GM10248 (cell line): ENCODE measurements at regions of chr2 and their contacts with region 1.

Region 1: DNA sequence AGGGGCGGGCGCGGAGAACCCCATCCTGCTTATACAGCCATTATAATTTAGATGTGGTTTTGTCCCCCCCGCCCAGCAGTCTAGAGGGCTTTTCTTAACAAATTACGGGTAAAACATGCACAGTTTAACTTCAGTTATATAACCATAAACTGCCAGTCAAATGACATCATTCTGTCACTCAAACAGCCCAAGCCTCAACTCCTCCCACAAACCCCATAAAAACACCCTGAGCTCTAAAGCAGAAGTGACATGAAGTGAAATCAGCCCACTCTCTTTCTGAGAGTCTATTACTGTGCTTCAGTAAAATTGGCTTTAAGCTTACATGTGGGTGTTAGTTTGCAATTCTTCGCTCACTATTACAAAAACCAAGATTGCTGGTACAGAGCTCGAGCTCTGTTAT is 705.1 kb upstream of the GCFC2 start:
- DNase-seq: peak; percentile 16
- CTCF ChIP-seq: no peak

Region 2: DNA sequence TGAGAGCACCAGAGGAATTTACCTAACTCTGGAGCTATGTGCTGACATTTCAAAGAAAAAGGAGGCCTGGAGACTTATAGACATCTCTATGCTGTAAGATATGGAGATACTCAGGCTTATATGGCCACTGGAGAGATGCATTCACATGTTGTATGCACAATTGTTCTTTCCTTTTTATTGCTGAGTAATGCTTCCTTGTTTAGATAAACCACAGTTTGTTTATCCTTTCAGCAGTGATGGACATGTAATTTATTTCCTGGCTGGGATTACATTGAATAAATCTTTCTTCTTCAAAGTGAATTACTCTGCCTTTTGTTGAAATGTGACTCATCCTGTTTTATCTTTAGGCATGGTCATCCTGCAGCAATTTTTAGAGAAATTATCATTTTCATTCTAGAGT is 11.6 kb after region 1 on chr2:
- CTCF ChIA-PET with region 1: interaction called, 10 read pairs
- POLR2A ChIA-PET with region 1: no interaction called
- DNase-seq: no peak
- CTCF ChIP-seq: no peak